Tibial artery (tissue), 4 donors: ENCODE measurements at regions of chr4 and their contacts with region 1.

Region 1: DNA sequence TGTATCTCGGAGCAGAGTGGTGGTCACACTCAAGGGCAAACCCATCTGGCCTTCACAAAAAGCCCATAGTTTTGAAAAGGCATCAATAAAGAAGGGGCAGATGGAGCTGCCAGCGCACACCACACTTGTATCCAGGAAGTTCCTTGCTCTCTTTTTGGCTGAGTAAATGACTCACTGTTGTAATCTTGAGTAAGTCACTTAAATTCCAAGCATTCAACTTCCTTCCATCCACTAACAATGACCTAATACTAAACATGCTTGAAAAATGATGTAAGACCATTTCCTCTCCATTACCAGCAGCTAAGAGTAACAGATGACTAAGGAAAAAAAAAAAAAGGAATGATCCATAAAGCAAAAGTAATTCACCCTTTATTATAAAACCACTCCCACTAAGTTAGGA is 32.4 kb upstream of the MYOZ2 start:
- DNase-seq: peak; percentile 48 to 71
- H3K4me3 ChIP-seq: no peak overlapping the region
- H3K27ac ChIP-seq: peak overlapping the region; percentile 35 to 45
- H3K4me1 ChIP-seq: peaks cover 0 to 67% (median 31%) of the 10 kb centered on the region in 4 donors
- H3K27me3 ChIP-seq: no peaks in the 10 kb centered on the region
- CTCF ChIP-seq: no peak

Region 2: DNA sequence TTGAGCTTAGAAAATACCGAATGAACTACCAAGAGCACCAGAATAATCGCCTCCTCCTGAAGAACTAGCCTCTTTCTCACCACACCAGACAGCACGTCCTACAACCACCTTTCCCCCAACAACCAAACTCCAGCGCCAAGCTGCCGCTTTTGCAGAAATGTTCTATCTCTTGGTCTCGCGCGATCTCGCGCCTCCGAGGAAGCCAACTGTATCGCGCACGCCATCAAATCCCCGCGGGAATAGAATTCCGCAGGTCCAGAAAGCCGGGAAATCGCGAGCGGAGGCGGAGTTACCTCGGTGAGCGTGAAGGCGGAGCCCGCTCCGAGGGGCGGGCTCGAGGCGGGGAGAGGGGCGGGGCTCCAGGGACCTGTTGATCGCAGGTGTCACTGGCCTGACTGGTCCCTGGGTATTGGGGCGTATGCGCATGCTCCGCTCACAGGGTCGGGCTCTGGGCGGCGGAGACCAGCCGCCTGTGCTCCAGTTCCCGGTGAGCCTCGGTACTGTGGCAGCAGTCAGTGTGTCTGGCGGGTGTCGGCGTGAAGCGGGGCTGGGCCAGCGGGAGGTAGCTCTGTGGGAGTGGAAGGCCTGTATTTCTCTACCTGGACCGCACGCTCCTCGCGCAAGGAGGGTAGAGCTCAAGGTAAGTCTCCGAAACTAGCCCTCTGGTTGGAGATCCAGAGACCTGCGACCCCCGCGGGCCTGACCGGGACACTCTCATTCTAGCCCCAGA is 109.1 kb after region 1 on chr4 and contains the start of gene USP53:
- intact Hi-C with region 1: loop called (anchors 10 kb)
- DNase-seq: peak; percentile 98 to 100
- H3K4me3 ChIP-seq: peak within 1 kb of the TSS; percentile 81 to 89
- H3K27ac ChIP-seq: peak within 1 kb of the TSS; percentile 97 to 98
- H3K4me1 ChIP-seq: peaks cover 0 to 26% (median 0%) of the 10 kb centered on the region in 4 donors
- H3K27me3 ChIP-seq: no peaks in the 10 kb centered on the region
- CTCF ChIP-seq: no peak

Region 3: DNA sequence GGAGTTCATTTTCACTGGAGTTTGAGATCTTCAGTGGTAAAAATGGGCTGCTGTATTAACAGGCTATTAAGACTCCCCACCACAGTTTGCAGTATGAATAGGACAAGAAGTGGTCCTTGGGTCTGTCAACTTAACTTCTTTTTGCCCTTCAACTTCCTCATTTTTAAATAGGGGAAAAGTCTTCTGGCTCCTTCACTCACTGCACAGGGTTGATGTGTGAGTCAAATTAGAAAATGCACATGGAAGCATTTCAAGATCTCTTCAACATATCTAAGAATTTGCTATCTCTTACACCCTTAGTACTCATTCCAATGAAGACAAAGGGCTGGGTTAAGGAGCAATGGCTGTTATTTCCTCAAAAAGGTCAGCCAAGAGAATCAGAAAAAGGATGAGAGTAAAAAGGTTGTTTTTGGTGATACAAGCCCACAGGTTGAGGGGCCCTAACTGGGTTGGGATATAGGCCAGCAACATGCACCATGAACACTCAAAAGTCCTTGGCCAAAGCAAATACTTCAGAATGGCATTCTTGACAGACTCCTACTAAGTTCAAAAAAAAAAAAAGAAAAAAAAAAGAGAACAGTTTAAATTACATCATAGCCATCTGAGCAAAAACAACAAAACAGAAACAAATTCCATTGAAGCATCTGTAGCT is 511.9 kb after region 1 on chr4:
- intact Hi-C with region 1: loop called (anchors 10 kb)
- DNase-seq: no peak
- H3K4me3 ChIP-seq: no peak overlapping the region
- H3K27ac ChIP-seq: peak overlapping the region; percentile 3 to 47
- H3K4me1 ChIP-seq: peaks cover 0 to 85% (median 19%) of the 10 kb centered on the region in 4 donors
- H3K27me3 ChIP-seq: no peaks in the 10 kb centered on the region
- CTCF ChIP-seq: no peak